ENCODE measurements at regions of chr7 and their contacts with region 1.

Region 1: DNA sequence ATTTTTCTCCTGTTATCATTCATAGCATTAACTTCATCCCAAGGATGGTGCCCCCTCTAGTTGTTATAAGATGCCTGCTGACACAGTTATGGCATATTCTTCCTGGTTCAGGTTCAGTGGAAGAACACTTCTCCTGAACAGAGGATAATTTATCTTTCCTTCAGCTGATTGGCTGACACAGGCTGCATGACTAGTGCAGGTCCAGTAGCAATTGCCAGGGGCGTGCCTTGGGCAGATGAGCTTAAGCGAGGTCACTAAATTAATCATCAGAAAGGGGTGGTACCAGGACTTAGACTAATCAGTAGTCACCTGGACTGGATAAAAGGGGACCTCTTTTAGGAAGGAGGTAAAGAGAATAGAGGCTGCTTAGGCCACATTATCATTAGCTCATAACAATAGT is 42.3 kb downstream of the BZW2 start:
- DNase-seq: no peak
- H3K4me3 ChIP-seq: no peak overlapping the region
- H3K27ac ChIP-seq: no peak overlapping the region
- H3K4me1 ChIP-seq: peaks cover 35% of the 10 kb centered on the region
- H3K27me3 ChIP-seq: no peaks in the 10 kb centered on the region
- CTCF ChIP-seq: no peak

Region 2: GRCh38 chr7:16431646-16432424 is 256.4 kb before region 1 on chr7:
- CTCF ChIA-PET with region 1: no interaction called
- POLR2A ChIA-PET with region 1: no interaction called
- intact Hi-C with region 1: loop called (anchors 10 kb)
- DNase-seq: peak; percentile 64
- H3K4me3 ChIP-seq: no peak overlapping the region
- H3K27ac ChIP-seq: no peak overlapping the region
- H3K4me1 ChIP-seq: no peaks in the 10 kb centered on the region
- H3K27me3 ChIP-seq: no peaks in the 10 kb centered on the region
- CTCF ChIP-seq: peak; percentile 50

Region 3: GRCh38 chr7:16604054-16604453 is 84.2 kb before region 1 on chr7:
- CTCF ChIA-PET with region 1: no interaction called
- POLR2A ChIA-PET with region 1: no interaction called
- intact Hi-C with region 1: loop called (anchors 10 kb)
- DNase-seq: peak; percentile 53
- H3K4me3 ChIP-seq: no peak overlapping the region
- H3K27ac ChIP-seq: no peak overlapping the region
- H3K4me1 ChIP-seq: no peaks in the 10 kb centered on the region
- H3K27me3 ChIP-seq: no peaks in the 10 kb centered on the region
- CTCF ChIP-seq: peak; percentile 54

Region 4: DNA sequence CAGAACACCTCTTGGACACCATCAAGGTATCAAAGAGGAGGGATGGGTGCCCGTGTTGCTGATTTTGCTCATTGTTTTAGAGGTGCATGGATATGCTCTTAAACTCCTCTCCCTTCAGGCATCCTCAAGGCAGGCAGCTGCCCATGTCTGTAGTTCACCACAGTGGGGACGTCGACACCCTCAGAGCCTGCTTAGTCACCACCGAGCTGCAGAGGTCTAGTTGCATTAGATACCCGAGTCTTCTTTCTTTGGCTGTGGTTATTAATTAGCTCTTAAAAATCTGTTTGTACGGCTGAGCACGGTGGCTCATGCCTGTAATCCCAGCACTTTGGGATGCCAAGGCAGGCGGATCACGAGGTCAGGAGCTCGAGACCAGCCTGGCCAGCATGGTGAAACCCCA is 40.6 kb after region 1 on chr7:
- CTCF ChIA-PET with region 1: no interaction called
- POLR2A ChIA-PET with region 1: no interaction called
- intact Hi-C with region 1: no loop called
- DNase-seq: no peak
- H3K4me3 ChIP-seq: no peak overlapping the region
- H3K27ac ChIP-seq: no peak overlapping the region
- H3K4me1 ChIP-seq: no peaks in the 10 kb centered on the region
- H3K27me3 ChIP-seq: no peaks in the 10 kb centered on the region
- CTCF ChIP-seq: no peak

Measured in A673 (cell line).